CD8-positive, alpha-beta T cell (primary cell): ENCODE measurements at regions of chr3 and their contacts with region 1.

Region 1: GRCh38 chr3:46049116-46049515 is 21.8 kb upstream of the XCR1 start:
- DNase-seq: no peak
- ATAC-seq: no peak
- H3K4me3 ChIP-seq: no peak overlapping the region
- H3K4me3 Mint-ChIP-seq: no peak overlapping the region
- H3K27ac ChIP-seq: no peak overlapping the region
- H3K27ac Mint-ChIP-seq: no peak overlapping the region
- H3K4me1 ChIP-seq: peaks cover 22% of the 10 kb centered on the region
- H3K4me1 Mint-ChIP-seq: peaks cover 37% of the 10 kb centered on the region
- H3K27me3 ChIP-seq: no peaks in the 10 kb centered on the region
- H3K27me3 Mint-ChIP-seq: no peaks in the 10 kb centered on the region
- CTCF ChIP-seq: no peak

Region 2: GRCh38 chr3:46027736-46028397 is 21.2 kb before region 1 on chr3:
- CTCF ChIA-PET with region 1: no interaction called
- POLR2A ChIA-PET with region 1: no interaction called
- intact Hi-C with region 1: loop called in 1 of 2 experiments (anchors 2 kb)
- DNase-seq: no peak
- ATAC-seq: no peak
- H3K4me3 ChIP-seq: no peak overlapping the region
- H3K4me3 Mint-ChIP-seq: no peak overlapping the region
- H3K27ac ChIP-seq: no peak overlapping the region
- H3K27ac Mint-ChIP-seq: no peak overlapping the region
- H3K4me1 ChIP-seq: no peaks in the 10 kb centered on the region
- H3K4me1 Mint-ChIP-seq: no peaks in the 10 kb centered on the region
- H3K27me3 ChIP-seq: no peaks in the 10 kb centered on the region
- H3K27me3 Mint-ChIP-seq: no peaks in the 10 kb centered on the region
- CTCF ChIP-seq: no peak

Region 3: GRCh38 chr3:46484911-46485778 is 436.0 kb after region 1 on chr3:
- CTCF ChIA-PET with region 1: no interaction called
- POLR2A ChIA-PET with region 1: no interaction called
- intact Hi-C with region 1: no loop called
- DNase-seq: no peak
- ATAC-seq: no peak
- H3K4me3 ChIP-seq: no peak overlapping the region
- H3K4me3 Mint-ChIP-seq: no peak overlapping the region
- H3K27ac ChIP-seq: no peak overlapping the region
- H3K27ac Mint-ChIP-seq: no peak overlapping the region
- H3K4me1 ChIP-seq: peaks cover 8% of the 10 kb centered on the region
- H3K4me1 Mint-ChIP-seq: peaks cover 16% of the 10 kb centered on the region
- H3K27me3 ChIP-seq: peaks cover 0 to 3% of the 10 kb centered on the region in 2 experiments
- H3K27me3 Mint-ChIP-seq: peaks cover 5% of the 10 kb centered on the region
- CTCF ChIP-seq: no peak